ENCODE measurements at regions of chrX and their contacts with region 1.

Region 1: DNA sequence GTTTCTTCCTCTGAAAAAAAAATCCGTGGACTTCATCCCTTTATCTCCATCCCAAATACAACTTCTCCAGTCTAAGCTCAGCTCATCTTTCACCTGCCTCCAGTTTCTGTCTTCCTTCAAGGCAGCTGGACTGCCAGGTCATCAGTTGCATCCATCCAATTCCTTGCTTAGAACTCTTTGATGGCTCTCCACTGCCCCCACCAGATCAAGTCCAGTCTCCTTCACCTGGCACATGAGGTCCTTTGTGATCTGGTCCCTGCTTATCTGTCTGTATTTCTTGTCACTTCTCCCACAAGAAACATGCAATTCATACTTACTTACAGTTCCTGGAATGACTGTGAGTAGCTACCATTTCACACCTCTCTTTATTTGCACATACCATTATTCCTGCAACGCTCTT is 33.8 kb downstream of the OTUD6A start:
- DNase-seq: no peak
- H3K4me3 Mint-ChIP-seq: no peak overlapping the region
- H3K27ac Mint-ChIP-seq: no peak overlapping the region
- H3K4me1 Mint-ChIP-seq: peaks cover 4% of the 10 kb centered on the region
- H3K27me3 Mint-ChIP-seq: peaks cover 7% of the 10 kb centered on the region

Region 2: GRCh38 chrX:69424161-69424560 is 671.9 kb before region 1 on chrX:
- intact Hi-C with region 1: loop called (anchors 5 kb)
- DNase-seq: no peak
- H3K4me3 Mint-ChIP-seq: no peak overlapping the region
- H3K27ac Mint-ChIP-seq: no peak overlapping the region
- H3K4me1 Mint-ChIP-seq: no peaks in the 10 kb centered on the region
- H3K27me3 Mint-ChIP-seq: peaks cover 2% of the 10 kb centered on the region

Region 3: GRCh38 chrX:69493193-69493592 is 602.9 kb before region 1 on chrX:
- intact Hi-C with region 1: loop called (anchors 5 kb)
- DNase-seq: no peak
- H3K4me3 Mint-ChIP-seq: no peak overlapping the region
- H3K27ac Mint-ChIP-seq: no peak overlapping the region
- H3K4me1 Mint-ChIP-seq: no peaks in the 10 kb centered on the region
- H3K27me3 Mint-ChIP-seq: no peaks in the 10 kb centered on the region

Region 4: GRCh38 chrX:69538321-69538876 is 557.7 kb before region 1 on chrX:
- intact Hi-C with region 1: loop called (anchors 5 kb)
- DNase-seq: peak; percentile 62
- H3K4me3 Mint-ChIP-seq: peak overlapping the region; percentile 22
- H3K27ac Mint-ChIP-seq: no peak overlapping the region
- H3K4me1 Mint-ChIP-seq: peaks cover 17% of the 10 kb centered on the region
- H3K27me3 Mint-ChIP-seq: peaks cover 2% of the 10 kb centered on the region

Region 5: DNA sequence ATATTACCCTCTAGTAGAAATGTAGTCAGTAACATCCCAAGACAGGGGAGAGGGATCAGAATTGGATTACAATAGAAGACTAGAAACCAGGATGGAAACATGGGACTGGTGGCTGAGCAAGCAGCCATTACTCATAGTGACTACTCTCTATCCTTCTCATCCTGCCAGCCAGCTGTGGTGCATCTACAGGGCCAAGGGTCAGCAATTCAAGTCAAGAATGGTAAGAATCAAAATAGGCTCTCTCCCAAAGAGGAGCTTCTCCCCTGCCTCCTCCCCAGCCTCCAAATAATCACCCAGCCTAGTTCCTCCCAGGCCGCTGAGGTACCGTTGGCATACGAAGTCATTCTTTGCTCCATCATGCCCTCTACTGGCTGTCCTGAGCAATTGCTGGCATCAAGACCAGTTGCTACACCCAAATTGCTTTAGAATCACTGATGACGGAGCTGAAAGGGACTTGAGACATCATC is 65.7 kb before region 1 on chrX:
- intact Hi-C with region 1: loop called (anchors 5 kb)
- DNase-seq: peak; percentile 15
- H3K4me3 Mint-ChIP-seq: no peak overlapping the region
- H3K27ac Mint-ChIP-seq: no peak overlapping the region
- H3K4me1 Mint-ChIP-seq: peaks cover 40% of the 10 kb centered on the region
- H3K27me3 Mint-ChIP-seq: peaks cover 3% of the 10 kb centered on the region